Left cardiac atrium (tissue), 4 donors: ENCODE measurements at regions of chr11 and their contacts with region 1.

Region 1: DNA sequence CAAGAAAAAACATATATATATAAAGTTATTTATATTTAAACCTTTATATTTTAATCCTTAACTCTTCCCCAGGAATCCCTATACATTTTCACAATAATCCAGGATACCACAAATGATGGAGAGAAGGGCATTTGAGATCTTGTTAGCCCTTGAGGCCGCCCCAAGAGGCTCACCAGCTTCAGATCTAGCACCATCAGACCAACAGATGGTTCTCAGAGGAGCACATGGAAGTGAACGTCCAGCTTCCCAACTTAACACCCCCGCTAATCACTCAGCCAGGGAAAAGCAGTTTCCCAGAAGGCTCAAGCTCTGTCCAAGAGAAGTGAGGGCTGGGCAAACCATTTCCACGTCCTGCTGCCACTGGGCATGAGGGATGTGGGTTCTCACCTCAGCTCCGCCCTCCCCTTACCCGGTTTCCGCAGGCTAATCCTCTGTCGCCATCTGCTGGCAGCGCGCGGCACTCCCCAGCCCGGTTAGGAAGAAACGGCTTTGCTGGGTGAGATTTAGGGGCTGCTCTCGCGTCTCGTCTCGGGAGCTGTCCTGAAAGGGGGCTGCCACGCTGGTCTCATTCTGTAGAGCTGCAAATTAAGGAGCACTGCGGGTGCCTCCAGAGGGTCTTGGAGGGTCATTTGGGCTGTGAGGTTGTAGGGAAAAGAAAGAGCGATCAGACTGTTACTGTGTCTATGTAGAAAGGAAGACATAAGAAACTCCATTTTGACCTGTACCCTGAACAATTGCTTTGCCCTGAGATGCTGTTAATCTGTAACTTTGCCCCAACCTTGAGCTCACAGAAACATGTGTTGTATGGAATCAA is 6.8 kb upstream of the FAM111A start:
- DNase-seq: peak; percentile 84
- ATAC-seq: peak; percentile 97 to 98

Region 2: DNA sequence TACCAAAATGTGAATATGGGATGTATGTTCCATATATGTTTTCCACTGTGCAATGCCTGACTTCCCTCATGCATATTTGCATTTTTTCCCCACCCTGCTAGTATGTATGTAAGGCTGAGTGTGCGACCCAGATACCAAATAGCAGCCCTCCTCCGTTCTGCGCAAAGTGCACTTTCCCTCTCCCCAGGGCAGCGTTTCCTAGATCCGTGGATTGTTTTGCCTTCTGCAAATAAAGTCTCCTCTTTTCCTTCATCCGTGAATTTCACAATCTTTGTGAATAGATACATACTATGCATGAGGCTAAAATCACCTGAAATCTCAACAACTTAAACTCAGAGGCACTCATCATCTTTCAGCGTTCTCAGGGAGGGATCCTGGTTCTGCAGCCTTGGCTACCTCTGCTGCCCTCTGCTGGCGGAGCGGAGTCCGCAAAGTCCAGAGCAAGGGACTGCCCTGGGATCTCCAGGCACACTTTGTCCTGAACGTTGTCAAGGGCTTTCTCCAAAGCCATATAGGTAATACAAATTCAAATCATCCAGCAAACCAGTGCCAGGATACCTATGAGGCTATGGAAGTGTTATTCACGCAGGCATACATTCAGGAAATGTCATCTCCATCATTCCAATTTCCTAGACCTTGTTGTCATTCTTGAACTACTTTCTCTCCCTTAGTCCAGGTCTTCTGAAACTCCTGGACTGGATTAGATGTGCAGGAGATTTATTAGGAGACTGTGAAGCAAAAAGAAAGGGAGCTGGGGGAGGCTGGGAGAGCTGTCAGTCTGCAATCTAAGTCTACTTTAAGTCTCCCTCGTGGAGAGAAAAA is 460.3 kb before region 1 on chr11:
- intact Hi-C with region 1: loop called in 1 of 2 experiments (anchors 10 kb)
- DNase-seq: peak; percentile 80
- ATAC-seq: peak; percentile 88 to 92